HAP-1 (cell line): ENCODE measurements at regions of chr2 and their contacts with region 1.

Region 1: DNA sequence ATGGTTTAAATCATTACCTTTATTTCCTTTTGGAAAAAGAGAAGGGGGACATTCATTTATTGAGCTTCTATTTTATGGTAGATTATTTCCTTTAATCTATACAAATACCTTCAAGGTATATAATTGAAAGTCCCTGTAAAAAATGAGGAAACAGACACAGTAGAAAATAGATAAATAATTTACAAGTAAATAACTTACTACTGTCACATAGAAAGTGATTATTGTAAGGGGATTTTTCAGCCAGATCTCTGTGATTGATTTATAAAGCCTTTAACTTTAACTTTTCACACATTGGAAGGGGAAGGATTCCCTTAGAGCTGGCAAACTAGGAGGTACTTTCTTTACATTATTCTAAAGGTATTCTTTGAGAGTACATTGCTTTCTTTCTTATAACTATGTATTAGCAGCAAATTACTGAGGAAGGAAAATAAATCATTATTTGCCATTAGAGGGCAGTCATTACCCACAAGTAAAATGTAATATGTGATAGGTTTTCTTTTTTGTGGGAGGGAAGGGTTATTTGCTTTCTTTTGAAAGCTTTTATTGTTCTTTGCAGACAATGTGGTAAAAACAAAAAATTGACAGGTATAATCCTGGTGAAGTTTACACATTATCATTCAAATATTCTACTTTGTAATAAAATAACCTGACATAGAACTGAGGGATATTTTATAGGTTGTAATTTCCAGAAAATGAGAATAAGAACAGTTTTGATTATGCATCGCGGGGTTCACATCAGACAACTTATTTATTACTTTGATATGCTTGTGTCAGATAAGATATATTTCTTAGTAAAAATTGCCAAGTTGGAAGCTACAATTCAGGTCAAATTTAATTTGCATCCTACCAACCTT is 24.8 kb upstream of the RPE start:
- DNase-seq: peak in 1 of 2 experiments; percentile 76
- H3K4me3 ChIP-seq: no peak overlapping the region
- H3K4me1 ChIP-seq: no peaks in the 10 kb centered on the region; the same call in 1 of the 2 replicates
- H3K27me3 ChIP-seq: peaks cover 13% of the 10 kb centered on the region

Region 2: DNA sequence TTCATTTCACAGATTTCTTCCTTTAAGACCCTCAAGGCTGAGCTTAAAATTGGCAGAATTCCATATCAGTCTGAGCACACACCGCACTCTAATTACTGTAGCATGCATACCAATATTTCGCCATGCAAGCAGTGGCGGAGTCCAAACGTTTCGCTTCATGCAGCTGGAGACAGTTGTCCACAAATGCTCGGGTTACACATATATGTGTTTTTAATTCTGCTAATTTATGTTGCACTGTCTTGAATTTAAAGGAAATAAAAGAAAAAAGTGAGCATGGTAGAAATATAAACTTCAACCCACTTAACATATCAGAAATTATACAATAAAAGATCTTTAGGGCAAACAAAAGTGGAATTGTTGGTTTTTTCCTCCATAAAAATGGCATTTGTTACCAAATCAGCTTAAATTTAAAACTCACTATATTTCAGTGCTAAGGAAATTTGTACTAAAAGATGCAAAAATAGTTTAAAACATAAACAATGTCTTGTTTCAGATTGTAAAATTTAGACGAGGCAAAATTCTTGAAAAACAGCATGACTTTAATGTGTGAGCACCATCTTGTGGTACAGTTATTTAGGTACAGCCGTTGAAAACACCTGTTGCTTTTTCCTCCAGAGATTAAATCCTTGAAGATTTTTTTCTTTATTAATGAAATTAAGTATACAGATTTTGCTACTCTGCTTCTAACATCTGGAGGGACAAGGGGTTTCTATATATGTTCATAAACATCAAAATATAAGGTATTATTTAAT is 217.7 kb after region 1 on chr2:
- in situ Hi-C with region 1: loop called (anchors 10 kb)
- DNase-seq: peak in 1 of 2 experiments; percentile 41
- H3K4me3 ChIP-seq: no peak overlapping the region
- H3K4me1 ChIP-seq: no peaks in the 10 kb centered on the region
- H3K27me3 ChIP-seq: no peaks in the 10 kb centered on the region